ENCODE measurements at regions of chr1 and their contacts with region 1.

Region 1: DNA sequence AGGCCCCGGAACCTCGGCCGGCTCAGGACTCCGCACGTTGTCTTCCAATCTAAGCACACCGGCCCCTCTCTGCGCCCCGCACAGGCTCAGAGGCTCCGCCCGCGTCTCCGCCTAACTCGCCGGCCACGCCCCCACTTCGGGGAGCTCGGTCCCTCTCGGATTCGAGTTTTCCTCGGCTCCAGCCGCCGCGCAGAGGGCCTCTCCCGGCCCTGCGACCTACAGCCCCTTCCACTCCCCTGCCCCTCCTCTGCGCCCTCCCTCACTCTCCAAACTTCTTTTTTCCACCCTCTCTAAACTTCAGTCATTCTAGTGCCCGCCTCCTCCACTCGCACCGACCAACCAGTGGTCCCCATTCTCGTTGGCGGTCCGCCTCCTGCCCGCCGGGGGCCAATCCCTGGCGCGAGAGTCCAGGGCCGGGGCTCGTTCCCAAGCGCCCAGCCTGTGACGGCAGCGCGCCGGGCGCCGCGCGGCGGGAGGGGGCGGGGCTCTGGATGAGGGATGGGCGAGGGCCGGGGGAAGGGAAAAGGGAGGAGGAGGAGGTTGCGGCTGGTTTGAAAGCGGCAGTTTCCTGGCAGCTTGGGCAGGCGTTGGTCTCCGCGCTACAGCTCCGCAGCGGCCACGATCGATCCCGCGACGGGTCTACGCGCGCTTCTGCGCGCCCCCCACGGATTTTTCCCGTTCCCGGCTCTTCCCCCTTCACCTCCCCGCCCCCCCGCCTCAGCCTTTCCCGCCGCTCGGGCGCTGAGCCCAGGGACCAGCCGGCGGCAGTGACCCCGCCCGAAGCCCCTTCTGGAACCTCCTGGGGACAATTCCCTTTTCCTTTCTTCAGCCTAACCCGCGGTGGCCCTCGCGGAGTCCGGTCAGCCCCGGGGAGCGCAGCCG is at the start of gene MAGI3:
- DNase-seq: peak; percentile 99
- H3K4me3 ChIP-seq: peak within 1 kb of the TSS; percentile 72 to 89 (median 88)
- H3K27ac ChIP-seq: peak within 1 kb of the TSS; percentile 75
- H3K4me1 ChIP-seq: peaks cover 14% of the 10 kb centered on the region
- H3K27me3 ChIP-seq: no peaks in the 10 kb centered on the region
- CTCF ChIP-seq: no peak
- POLR2A ChIP-seq: peak; percentile 42
- total RNA-seq, gene MAGI3: 13.9 and 16.1 TPM in 2 replicates

Region 2: DNA sequence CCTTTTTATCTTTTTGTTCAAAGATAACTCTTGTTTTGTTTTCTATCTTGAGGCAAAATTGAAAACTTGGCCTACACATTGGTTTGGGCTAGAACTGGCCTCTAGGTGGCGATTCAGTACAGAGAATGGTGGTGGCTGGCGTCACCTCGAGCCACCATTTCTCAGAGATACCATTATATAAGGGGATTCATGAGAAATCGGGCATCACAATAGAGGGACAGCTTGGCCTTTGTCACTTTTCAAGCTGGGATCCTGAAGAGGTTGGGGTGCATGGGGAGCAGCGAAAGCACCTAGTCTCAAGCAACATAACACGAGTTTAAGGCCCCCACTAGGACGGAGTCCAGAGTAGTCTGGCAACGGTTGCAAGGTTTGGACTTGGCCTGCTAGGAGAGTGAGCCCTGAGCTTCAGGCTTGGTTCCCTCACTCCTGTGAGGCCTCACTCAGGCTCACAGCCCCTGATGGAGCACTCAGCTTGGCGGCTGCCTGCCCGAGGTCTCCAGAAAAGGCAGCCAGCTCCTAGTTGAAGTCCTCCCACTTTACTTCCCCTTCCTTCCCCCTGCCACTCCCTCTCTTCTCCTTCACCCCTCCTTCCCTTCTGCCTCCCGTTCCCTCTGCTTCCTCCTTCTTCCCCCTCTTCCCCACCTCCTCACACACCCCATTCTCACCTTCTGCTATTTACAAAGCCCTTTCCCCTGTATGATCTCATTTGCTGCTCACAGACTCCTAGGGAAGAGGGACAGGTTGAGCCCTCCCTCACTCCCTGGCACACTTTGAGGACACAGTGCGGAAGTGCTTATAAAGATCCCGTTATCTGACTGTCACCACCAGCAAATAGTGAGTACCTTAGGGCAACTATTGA is 249.4 kb before region 1 on chr1:
- CTCF ChIA-PET with region 1: interaction called, 10 read pairs
- POLR2A ChIA-PET with region 1: no interaction called
- dilution Hi-C with region 1: no loop called
- intact Hi-C with region 1: loop called (anchors 2 kb)
- DNase-seq: peak; percentile 64
- H3K4me3 ChIP-seq: no peak overlapping the region
- H3K27ac ChIP-seq: no peak overlapping the region
- H3K4me1 ChIP-seq: peaks cover 26% of the 10 kb centered on the region
- H3K27me3 ChIP-seq: no peaks in the 10 kb centered on the region
- CTCF ChIP-seq: peak; percentile 77 to 87
- POLR2A ChIP-seq: no peak

Region 3: DNA sequence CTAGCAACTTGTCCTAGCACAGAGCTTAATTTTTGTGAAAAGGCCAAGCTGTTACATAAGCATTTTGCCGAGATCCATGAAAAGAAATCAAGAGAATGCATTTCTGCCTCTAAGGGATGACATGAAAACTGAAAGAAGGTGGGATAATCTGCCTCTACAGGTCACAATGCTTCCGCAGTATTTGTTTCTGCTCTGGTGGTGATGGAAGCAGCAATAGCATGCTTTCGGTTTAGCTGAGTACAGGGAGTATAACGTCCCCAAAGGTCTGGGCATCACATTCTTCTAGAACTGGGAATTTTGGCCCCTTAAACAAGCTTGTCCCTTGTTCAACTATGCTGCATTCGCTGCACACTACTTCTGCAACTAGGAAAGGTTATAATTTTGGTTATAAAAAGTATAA is 14.3 kb before region 1 on chr1:
- CTCF ChIA-PET with region 1: no interaction called
- POLR2A ChIA-PET with region 1: no interaction called
- dilution Hi-C with region 1: no loop called
- intact Hi-C with region 1: no loop called
- DNase-seq: no peak
- H3K4me3 ChIP-seq: no peak overlapping the region
- H3K27ac ChIP-seq: no peak overlapping the region
- H3K4me1 ChIP-seq: no peaks in the 10 kb centered on the region
- H3K27me3 ChIP-seq: peaks cover 0 to 2% of the 10 kb centered on the region in 2 experiments
- CTCF ChIP-seq: no peak
- POLR2A ChIP-seq: no peak

Region 4: DNA sequence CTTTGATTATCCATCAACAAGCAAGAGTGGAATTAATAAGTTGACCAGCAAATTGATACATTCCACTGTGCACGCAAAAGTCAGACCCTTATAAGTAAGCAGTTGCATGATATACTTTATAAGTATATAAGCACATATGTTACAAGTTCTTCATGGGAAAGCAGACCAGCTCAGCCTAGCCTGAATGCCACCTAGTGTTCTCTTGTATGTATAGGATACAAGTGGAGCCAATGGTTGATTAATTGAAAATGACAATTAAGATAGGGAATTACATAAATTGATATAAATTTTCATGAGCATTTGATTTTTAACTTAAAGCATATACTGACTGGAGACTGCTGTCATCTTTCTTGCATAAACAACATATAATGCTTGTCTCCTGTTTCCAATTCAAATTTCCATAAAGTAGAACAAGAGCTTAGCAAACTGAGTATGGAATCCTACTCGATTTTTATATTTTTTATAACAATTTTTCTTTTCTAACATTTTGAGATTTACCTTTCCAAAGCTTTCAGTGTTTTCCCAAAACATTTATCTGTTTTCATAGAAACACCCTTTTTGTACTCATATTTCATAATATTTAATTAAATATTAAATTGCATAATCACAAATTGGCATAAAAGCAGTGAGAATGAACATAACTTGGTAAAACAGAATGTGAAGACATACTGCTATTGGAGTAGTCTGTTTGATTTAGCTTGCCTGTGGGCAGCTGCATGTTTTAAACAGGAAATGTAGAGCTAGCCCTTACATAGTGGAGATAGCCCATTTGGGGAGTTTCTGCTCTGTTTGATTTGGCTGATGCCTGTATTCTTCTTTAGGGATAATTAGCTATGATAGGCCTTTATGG is 63.0 kb after region 1 on chr1:
- CTCF ChIA-PET with region 1: interaction called, 22 read pairs
- POLR2A ChIA-PET with region 1: interaction called, 4 read pairs
- dilution Hi-C with region 1: no loop called
- intact Hi-C with region 1: loop called (anchors 1 kb)
- DNase-seq: peak; percentile 60
- H3K4me3 ChIP-seq: no peak overlapping the region
- H3K27ac ChIP-seq: no peak overlapping the region
- H3K4me1 ChIP-seq: peaks cover 30% of the 10 kb centered on the region
- H3K27me3 ChIP-seq: no peaks in the 10 kb centered on the region
- CTCF ChIP-seq: peak; percentile 19 to 44
- POLR2A ChIP-seq: no peak

Region 5: GRCh38 chr1:113659035-113659434 is 268.8 kb after region 1 on chr1:
- CTCF ChIA-PET with region 1: no interaction called
- POLR2A ChIA-PET with region 1: no interaction called
- dilution Hi-C with region 1: no loop called
- intact Hi-C with region 1: loop called (anchors 5 kb)
- DNase-seq: peak; percentile 83
- H3K4me3 ChIP-seq: peak overlapping the region in 2 of 3 experiments; percentile 2 to 7
- H3K27ac ChIP-seq: peak overlapping the region; percentile 72
- H3K4me1 ChIP-seq: peaks cover 15% of the 10 kb centered on the region
- H3K27me3 ChIP-seq: no peaks in the 10 kb centered on the region
- CTCF ChIP-seq: no peak
- POLR2A ChIP-seq: no peak

Region 6: DNA sequence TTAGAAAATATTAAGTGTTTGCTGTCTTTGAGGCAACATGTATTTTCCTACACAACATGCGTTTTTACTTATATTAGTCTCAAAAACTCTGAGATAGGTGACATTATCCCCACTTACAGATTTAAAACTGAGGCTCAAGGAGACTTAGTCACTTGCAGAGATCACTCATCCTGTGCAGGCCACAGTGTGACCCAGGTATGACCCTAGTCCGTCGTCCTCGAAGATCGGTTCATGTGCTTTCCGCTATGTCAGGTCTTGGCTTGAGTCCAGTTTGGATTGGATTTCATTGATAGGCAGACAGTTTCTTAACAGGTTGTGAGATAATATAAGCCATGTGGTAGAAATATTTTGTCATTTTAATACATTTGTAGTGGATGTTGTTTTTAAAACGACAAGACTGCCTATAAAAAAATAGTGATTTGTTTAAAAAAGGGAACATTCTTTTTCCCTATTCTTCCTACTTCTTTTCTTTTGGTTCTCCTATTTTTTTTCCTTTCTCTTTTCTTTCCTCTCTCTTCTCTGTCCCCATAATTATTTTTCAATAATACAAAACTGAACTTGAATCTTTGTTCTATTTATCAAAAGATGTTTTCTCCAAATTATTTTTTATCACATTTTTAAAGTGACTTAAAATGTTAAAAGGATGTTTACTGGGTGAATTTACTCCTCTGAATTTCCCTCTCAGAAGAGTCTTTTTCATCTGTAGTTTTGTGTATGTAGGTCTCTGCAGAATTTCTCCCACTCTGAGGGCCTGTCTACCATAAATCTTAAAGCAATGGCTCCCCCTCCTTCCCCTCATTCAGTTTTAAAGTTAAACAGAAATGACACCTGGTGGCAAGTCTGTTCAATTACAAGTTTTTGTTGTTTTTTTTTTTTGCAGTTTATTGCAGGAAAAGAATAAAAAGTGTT is 287.3 kb after region 1 on chr1:
- CTCF ChIA-PET with region 1: interaction called, 5 read pairs
- POLR2A ChIA-PET with region 1: no interaction called
- dilution Hi-C with region 1: no loop called
- intact Hi-C with region 1: loop called (anchors 2 kb)
- DNase-seq: peak; percentile 67
- H3K4me3 ChIP-seq: no peak overlapping the region
- H3K27ac ChIP-seq: no peak overlapping the region
- H3K4me1 ChIP-seq: peaks cover 8% of the 10 kb centered on the region
- H3K27me3 ChIP-seq: no peaks in the 10 kb centered on the region
- CTCF ChIP-seq: peak; percentile 18 to 33
- POLR2A ChIP-seq: no peak

Region 7: GRCh38 chr1:113811888-113812660 is 421.9 kb after region 1 on chr1 and contains the start of gene RSBN1:
- CTCF ChIA-PET with region 1: no interaction called
- POLR2A ChIA-PET with region 1: no interaction called
- dilution Hi-C with region 1: no loop called
- intact Hi-C with region 1: loop called (anchors 2 kb)
- DNase-seq: peak; percentile 100
- H3K4me3 ChIP-seq: peak within 1 kb of the TSS; percentile 65 to 97 (median 74)
- H3K27ac ChIP-seq: peak within 1 kb of the TSS; percentile 81
- H3K4me1 ChIP-seq: peaks cover 26% of the 10 kb centered on the region
- H3K27me3 ChIP-seq: no peaks in the 10 kb centered on the region
- CTCF ChIP-seq: peak in 1 of 2 donors; percentile 8
- POLR2A ChIP-seq: peak; percentile 89
- total RNA-seq, gene RSBN1: 10.8 and 13.4 TPM in 2 replicates

Region 8: DNA sequence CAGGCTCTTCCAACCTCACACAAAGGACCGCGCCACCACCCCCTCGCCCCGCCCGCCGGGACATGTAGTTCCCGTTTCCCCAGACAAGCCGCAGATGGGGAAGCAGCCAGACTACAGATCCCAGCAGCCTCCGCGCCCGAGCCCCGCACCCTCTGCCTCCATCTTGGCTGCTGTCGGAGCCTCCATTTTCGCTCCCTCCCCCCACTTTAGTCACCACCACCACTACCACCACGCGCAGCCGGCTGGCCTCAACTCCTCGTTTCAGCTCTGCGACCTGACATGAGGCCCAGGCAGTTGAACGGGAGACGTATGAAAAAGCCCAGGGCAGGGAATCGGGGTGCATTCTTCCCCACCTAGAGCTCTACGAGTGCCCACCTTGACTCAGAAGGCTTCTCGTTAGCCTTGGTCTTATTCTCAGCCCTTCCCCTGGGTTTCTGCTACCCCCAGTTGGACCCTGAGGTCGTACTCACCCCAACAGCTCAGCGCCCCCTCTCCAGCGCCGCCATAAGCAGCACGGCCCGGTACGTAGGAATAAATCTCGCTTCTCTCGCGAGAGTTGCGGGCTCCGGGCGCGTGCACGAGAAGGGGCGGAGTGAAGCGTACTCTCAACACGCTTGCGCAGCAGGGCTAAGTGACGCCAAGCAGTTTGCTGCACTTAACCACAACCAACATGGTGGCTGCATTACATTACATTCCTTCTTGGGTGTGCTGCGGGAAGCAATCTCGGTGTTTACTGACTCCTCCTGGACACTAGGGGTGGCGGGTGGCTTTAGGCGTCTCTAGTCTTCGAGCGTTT is 1367.5 kb after region 1 on chr1 and contains the start of gene CSDE1:
- CTCF ChIA-PET with region 1: no interaction called
- POLR2A ChIA-PET with region 1: no interaction called
- dilution Hi-C with region 1: no loop called
- intact Hi-C with region 1: loop called (anchors 5 kb)
- DNase-seq: peak; percentile 99
- H3K4me3 ChIP-seq: peak within 1 kb of the TSS; percentile 75 to 93 (median 91)
- H3K27ac ChIP-seq: peak within 1 kb of the TSS; percentile 98
- H3K4me1 ChIP-seq: peaks cover 28% of the 10 kb centered on the region
- H3K27me3 ChIP-seq: no peaks in the 10 kb centered on the region
- CTCF ChIP-seq: peak; percentile 31 to 36
- POLR2A ChIP-seq: peak; percentile 91
- total RNA-seq, gene CSDE1: 486 and 492 TPM in 2 replicates

Measured in endothelial cell of umbilical vein (primary cell).